ENCODE measurements at regions of chr9 and their contacts with region 1.

Region 1: GRCh38 chr9:116149844-116150243 is 3.7 kb upstream of the PAPPA start:
- DNase-seq: peak; percentile 32
- ATAC-seq: no peak
- H3K4me3 Mint-ChIP-seq: no peak overlapping the region
- H3K27ac Mint-ChIP-seq: no peak overlapping the region
- H3K4me1 Mint-ChIP-seq: peaks cover 2% of the 10 kb centered on the region
- H3K27me3 Mint-ChIP-seq: peaks cover 49% of the 10 kb centered on the region

Region 2: GRCh38 chr9:116081435-116082120 is 68.3 kb before region 1 on chr9:
- CTCF ChIA-PET with region 1: no interaction called
- POLR2A ChIA-PET with region 1: no interaction called
- intact Hi-C with region 1: no loop called
- DNase-seq: no peak
- ATAC-seq: no peak
- H3K4me3 Mint-ChIP-seq: no peak overlapping the region
- H3K27ac Mint-ChIP-seq: no peak overlapping the region
- H3K4me1 Mint-ChIP-seq: no peaks in the 10 kb centered on the region
- H3K27me3 Mint-ChIP-seq: no peaks in the 10 kb centered on the region

Region 3: GRCh38 chr9:116101516-116101915 is 48.3 kb before region 1 on chr9:
- CTCF ChIA-PET with region 1: no interaction called
- POLR2A ChIA-PET with region 1: no interaction called
- intact Hi-C with region 1: loop called in 1 of 2 experiments (anchors 5 kb)
- DNase-seq: no peak
- ATAC-seq: no peak
- H3K4me3 Mint-ChIP-seq: no peak overlapping the region
- H3K27ac Mint-ChIP-seq: no peak overlapping the region
- H3K4me1 Mint-ChIP-seq: no peaks in the 10 kb centered on the region
- H3K27me3 Mint-ChIP-seq: peaks cover 2% of the 10 kb centered on the region

Region 4: GRCh38 chr9:116166710-116167385 is 17.0 kb after region 1 on chr9:
- CTCF ChIA-PET with region 1: no interaction called
- POLR2A ChIA-PET with region 1: no interaction called
- intact Hi-C with region 1: no loop called
- DNase-seq: no peak
- ATAC-seq: no peak
- H3K4me3 Mint-ChIP-seq: no peak overlapping the region
- H3K27ac Mint-ChIP-seq: no peak overlapping the region
- H3K4me1 Mint-ChIP-seq: no peaks in the 10 kb centered on the region
- H3K27me3 Mint-ChIP-seq: no peaks in the 10 kb centered on the region

Region 5: GRCh38 chr9:116566677-116567488 is 417.0 kb after region 1 on chr9:
- CTCF ChIA-PET with region 1: no interaction called
- POLR2A ChIA-PET with region 1: no interaction called
- intact Hi-C with region 1: loop called (anchors 2 to 10 kb)
- DNase-seq: no peak
- ATAC-seq: no peak
- H3K4me3 Mint-ChIP-seq: no peak overlapping the region
- H3K27ac Mint-ChIP-seq: no peak overlapping the region
- H3K4me1 Mint-ChIP-seq: no peaks in the 10 kb centered on the region
- H3K27me3 Mint-ChIP-seq: no peaks in the 10 kb centered on the region

Region 6: DNA sequence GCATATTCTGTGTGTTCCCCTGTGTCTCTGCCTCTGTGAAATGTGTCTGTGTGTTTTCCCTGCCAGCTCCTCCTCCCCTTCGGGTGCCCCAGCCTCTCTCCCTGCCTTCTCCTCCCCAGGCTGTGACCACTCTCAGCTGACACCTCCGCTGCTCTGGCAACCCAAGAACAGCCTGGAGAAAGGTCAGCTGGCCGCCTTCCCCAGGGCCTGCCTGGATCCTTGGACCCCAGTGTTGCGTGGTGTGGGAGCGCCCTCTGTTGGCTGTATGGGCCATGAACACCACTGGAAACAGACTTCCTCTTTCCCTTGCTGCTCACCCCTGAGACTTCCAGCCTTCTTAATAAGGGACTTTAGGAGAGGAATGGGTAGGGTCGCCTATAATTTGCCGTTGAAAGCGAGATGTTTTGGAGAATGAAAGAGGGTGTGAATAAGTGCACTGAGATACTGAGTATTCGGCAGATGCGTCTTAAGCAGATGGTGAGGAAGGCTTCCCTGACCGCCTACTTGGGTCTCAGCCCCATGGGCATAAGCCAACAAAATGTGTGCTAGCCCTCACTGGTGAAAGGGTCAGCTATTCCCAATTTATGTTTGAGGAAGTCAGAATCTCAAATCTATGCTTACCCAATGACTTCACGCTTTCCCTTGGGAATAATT is 422.4 kb after region 1 on chr9:
- CTCF ChIA-PET with region 1: no interaction called
- POLR2A ChIA-PET with region 1: no interaction called
- intact Hi-C with region 1: loop called (anchors 2 to 10 kb)
- DNase-seq: peak; percentile 64
- ATAC-seq: no peak
- H3K4me3 Mint-ChIP-seq: no peak overlapping the region
- H3K27ac Mint-ChIP-seq: no peak overlapping the region
- H3K4me1 Mint-ChIP-seq: no peaks in the 10 kb centered on the region
- H3K27me3 Mint-ChIP-seq: no peaks in the 10 kb centered on the region

Region 7: DNA sequence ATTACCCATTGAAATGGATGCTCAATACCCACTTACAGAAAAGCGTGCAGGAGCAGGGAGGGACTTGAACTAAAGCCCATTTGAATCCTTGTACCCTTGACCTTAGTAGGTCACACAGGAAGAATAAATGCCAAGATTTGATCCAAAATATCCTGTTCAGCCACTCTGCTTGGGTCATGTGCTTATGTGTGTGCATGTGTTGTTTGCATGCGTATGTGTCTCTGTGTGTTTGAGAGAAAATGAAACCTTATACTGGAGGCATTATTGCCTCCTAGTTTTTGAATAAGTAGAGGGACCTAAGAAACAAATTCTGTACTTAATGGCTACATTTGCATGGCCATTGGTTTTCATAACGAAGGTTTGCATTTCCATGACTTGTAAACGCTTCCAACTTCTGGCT is 473.9 kb after region 1 on chr9:
- CTCF ChIA-PET with region 1: no interaction called
- POLR2A ChIA-PET with region 1: no interaction called
- intact Hi-C with region 1: no loop called
- DNase-seq: no peak
- ATAC-seq: no peak
- H3K4me3 Mint-ChIP-seq: no peak overlapping the region
- H3K27ac Mint-ChIP-seq: no peak overlapping the region
- H3K4me1 Mint-ChIP-seq: no peaks in the 10 kb centered on the region
- H3K27me3 Mint-ChIP-seq: no peaks in the 10 kb centered on the region

Region 8: DNA sequence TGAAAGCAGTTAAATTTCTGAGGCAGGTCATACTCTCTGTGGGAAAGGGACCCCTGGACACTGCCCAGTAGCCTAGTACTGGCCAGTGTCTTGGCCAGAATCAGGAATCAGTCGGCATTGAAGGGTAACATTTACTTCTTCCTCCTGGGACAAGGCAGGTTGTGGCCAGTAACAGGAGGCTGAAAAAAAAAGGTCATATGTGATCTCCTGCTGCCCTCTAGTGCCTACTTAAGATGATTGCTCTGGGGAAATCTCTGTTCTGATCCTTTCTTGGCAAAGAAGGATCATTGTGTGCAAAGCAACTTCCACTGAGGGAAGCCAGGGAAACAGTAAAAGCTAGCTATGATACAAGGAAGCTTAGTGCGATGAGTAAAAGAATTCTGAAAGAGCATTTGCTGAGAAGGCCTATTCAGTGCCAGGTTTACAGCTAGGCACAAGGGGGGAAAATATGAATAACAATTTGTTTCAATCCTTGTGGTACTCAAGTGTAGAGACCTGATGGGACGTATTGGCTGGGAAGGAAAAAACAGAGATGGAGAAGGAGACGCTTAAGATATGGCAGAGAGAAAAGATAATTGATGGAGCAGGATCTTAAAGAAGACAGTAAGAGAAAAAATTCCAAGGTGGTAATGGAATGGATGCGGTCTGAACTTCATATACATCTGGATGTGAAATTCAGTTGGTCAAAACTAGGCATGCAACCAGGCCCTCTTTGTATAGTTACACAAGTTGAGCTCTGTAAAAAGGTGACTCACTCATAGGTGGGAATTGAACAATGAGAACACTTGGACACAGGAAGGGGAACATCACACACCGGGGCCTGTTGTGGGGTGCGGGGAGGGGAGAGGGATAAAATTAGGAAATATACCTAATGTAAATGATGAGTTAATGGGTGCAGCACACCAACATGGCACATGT is 511.5 kb after region 1 on chr9:
- CTCF ChIA-PET with region 1: no interaction called
- POLR2A ChIA-PET with region 1: no interaction called
- intact Hi-C with region 1: loop called in 1 of 2 experiments (anchors 5 kb)
- DNase-seq: no peak
- ATAC-seq: peak; percentile 58
- H3K4me3 Mint-ChIP-seq: no peak overlapping the region
- H3K27ac Mint-ChIP-seq: no peak overlapping the region
- H3K4me1 Mint-ChIP-seq: no peaks in the 10 kb centered on the region
- H3K27me3 Mint-ChIP-seq: no peaks in the 10 kb centered on the region

Measured in activated CD4-positive, alpha-beta T cell treated with anti-CD3 and anti-CD28 coated beads for 36 hours (primary cell).